PC-3 (cell line): ENCODE measurements at regions of chr4 and their contacts with region 1.

Region 1: DNA sequence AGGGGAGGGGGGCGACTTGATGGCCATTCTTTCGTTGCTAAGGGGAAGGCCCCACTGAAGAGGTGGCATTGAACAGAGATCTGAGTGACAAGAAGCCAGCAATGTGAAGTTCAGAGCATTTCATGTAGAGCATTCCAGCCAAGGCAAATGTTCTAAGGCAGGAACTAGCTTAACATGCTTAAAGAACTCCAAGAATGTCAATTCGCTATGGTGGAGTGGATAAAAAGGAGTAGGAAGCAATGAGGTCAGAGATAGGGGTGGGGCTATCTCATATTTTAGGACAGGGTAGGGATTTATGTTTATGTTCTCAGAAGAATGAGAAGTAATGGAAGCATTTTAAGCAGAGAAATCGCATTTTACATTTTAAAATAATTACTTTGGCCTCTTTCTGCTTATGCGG is 130.9 kb downstream of the TTC29 start:
- DNase-seq: no peak
- ATAC-seq: no peak
- H3K4me3 ChIP-seq: no peak overlapping the region
- H3K27ac ChIP-seq: no peak overlapping the region
- H3K4me1 ChIP-seq: no peaks in the 10 kb centered on the region
- H3K27me3 ChIP-seq: peaks cover 23% of the 10 kb centered on the region
- CTCF ChIP-seq: no peak

Region 2: GRCh38 chr4:146661367-146661766 is 153.4 kb before region 1 on chr4:
- CTCF ChIA-PET with region 1: interaction called, 10 read pairs
- POLR2A ChIA-PET with region 1: no interaction called
- intact Hi-C with region 1: no loop called
- DNase-seq: no peak
- ATAC-seq: no peak
- H3K4me3 ChIP-seq: no peak overlapping the region
- H3K27ac ChIP-seq: no peak overlapping the region
- H3K4me1 ChIP-seq: no peaks in the 10 kb centered on the region
- H3K27me3 ChIP-seq: peaks cover 29% of the 10 kb centered on the region
- CTCF ChIP-seq: no peak

Region 3: DNA sequence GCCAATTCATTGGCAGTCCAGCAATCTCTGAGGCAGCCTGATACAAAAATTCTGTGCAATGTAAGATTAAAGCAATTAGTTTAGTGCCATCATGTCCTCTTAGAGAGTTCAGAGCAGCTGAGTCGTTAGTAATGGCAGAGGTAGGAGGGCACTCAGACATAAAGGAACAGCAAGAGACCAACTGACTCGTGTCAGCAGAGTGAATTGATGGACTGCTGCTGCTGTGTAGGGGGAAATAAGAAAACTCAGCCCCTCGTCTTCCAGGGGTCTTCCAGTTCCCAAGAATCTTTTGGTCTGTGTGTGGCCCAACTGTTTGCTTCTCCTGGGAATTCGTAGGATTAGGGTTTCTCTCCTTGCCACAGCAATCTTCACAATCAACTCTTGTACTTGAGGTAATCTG is 30.0 kb after region 1 on chr4:
- CTCF ChIA-PET with region 1: no interaction called
- POLR2A ChIA-PET with region 1: no interaction called
- intact Hi-C with region 1: no loop called
- DNase-seq: no peak
- ATAC-seq: no peak
- H3K4me3 ChIP-seq: no peak overlapping the region
- H3K27ac ChIP-seq: no peak overlapping the region
- H3K4me1 ChIP-seq: no peaks in the 10 kb centered on the region
- H3K27me3 ChIP-seq: peaks cover 67% of the 10 kb centered on the region
- CTCF ChIP-seq: no peak

Region 4: DNA sequence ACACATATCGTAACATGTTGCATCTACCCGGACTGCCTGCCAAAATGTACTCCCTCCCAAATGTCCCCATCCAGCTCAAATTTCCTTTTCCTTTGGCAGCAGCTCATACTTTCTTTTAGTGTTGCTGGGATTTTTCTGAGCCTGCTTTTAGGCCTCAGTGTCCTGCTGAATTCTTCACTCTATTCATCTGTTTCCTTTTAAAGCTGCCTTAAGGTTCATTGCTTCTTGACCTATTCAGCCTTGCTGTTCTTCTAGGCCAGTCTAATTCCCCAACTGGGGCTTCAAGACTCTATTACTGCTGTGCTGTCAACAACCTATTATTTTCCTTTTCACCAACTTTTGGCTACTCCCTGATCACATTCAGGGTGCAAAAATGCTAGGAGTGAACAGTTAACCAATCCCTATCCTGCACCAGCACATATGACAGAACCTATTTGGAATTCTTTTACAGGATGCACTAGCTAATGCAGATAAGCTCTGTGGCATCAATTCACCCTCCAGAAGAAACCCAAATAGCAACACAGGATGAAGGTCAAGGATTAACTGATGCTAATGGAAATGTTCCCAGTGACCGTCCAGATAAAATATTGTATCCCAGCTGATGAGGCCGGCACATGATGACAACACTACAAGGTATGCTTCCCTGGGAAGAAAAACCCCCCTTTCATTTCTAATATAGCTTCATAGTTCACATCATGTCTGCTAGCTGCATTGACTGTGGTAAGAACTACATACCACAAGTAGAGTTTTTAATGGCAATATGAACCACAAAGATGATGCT is 245.6 kb after region 1 on chr4:
- CTCF ChIA-PET with region 1: no interaction called
- POLR2A ChIA-PET with region 1: no interaction called
- intact Hi-C with region 1: no loop called
- DNase-seq: no peak
- ATAC-seq: no peak
- H3K4me3 ChIP-seq: no peak overlapping the region
- H3K27ac ChIP-seq: no peak overlapping the region
- H3K4me1 ChIP-seq: peaks cover 9% of the 10 kb centered on the region
- H3K27me3 ChIP-seq: no peaks in the 10 kb centered on the region; the same call in 1 of the 2 replicates
- CTCF ChIP-seq: no peak